ENCODE measurements at regions of chr13 and their contacts with region 1.

Region 1: GRCh38 chr13:97975848-97976609 is 22.6 kb downstream of the IPO5 start:
- DNase-seq: peak; percentile 89
- ATAC-seq: peak; percentile 86
- H3K4me3 ChIP-seq: peak overlapping the region; percentile 95
- H3K27ac ChIP-seq: peak overlapping the region; percentile 73
- H3K4me1 ChIP-seq: peaks cover 24% of the 10 kb centered on the region
- H3K27me3 ChIP-seq: no peaks in the 10 kb centered on the region
- CTCF ChIP-seq: no peak

Region 2: GRCh38 chr13:97879646-97880310 is 96.3 kb before region 1 on chr13:
- CTCF ChIA-PET with region 1: no interaction called
- POLR2A ChIA-PET with region 1: interaction called, 3 read pairs
- intact Hi-C with region 1: loop called (anchors 1 kb)
- DNase-seq: peak; percentile 87
- ATAC-seq: peak; percentile 94
- H3K4me3 ChIP-seq: peak overlapping the region; percentile 38; the same call in 1 of the 2 replicates
- H3K27ac ChIP-seq: peak overlapping the region; percentile 90
- H3K4me1 ChIP-seq: peaks cover 34% of the 10 kb centered on the region
- H3K27me3 ChIP-seq: no peaks in the 10 kb centered on the region
- CTCF ChIP-seq: no peak

Region 3: DNA sequence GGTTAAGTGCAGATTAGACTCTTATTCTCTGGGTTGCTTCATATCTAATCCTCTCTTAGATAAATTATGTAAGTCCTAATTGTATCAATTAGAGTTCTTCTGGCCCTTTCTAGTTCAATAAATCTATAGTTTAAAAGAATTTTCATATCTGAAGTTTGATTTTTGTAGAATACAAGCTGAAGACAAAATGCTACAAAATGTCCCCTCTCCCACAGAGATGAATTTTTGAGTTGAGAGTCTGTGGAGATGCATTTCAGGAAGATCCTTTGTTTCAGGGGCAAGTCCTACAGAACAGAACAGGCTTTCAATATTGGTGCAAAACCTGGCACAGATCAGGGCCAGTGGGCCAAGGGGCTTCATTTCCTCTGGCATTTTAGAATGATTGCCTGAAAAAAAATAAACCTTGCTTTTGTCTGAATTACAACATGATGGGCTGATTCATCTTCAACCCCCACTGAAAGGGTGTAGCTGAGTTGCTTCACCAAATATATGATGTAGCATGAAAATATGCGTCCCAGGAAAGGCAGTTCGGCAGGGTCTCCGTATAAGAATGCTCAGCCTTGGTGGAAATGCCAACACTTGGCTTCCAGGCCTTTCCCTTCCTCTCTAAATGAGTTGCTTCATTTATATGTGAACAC is 29.0 kb before region 1 on chr13:
- CTCF ChIA-PET with region 1: no interaction called
- POLR2A ChIA-PET with region 1: no interaction called
- intact Hi-C with region 1: loop called (anchors 2 kb)
- DNase-seq: peak; percentile 91
- ATAC-seq: peak; percentile 68
- H3K4me3 ChIP-seq: no peak overlapping the region
- H3K27ac ChIP-seq: peak overlapping the region; percentile 98
- H3K4me1 ChIP-seq: peaks cover 57% of the 10 kb centered on the region
- H3K27me3 ChIP-seq: no peaks in the 10 kb centered on the region
- CTCF ChIP-seq: no peak

Region 4: GRCh38 chr13:98022210-98022609 is 46.2 kb after region 1 on chr13:
- CTCF ChIA-PET with region 1: no interaction called
- POLR2A ChIA-PET with region 1: no interaction called
- intact Hi-C with region 1: loop called (anchors 5 kb)
- DNase-seq: peak; percentile 78
- ATAC-seq: peak; percentile 95
- H3K4me3 ChIP-seq: no peak overlapping the region
- H3K27ac ChIP-seq: 0 out of 2 replicates have a peak overlapping the region, but pooled peaks have one; percentile 26
- H3K4me1 ChIP-seq: peaks cover 7% of the 10 kb centered on the region; the same call in 1 of the 2 replicates
- H3K27me3 ChIP-seq: no peaks in the 10 kb centered on the region
- CTCF ChIP-seq: no peak